Activated B cell treated with CpG ODN at 0.5 μM for 24 hours (primary cell): ENCODE measurements at regions of chr11 and their contacts with region 1.

Region 1: DNA sequence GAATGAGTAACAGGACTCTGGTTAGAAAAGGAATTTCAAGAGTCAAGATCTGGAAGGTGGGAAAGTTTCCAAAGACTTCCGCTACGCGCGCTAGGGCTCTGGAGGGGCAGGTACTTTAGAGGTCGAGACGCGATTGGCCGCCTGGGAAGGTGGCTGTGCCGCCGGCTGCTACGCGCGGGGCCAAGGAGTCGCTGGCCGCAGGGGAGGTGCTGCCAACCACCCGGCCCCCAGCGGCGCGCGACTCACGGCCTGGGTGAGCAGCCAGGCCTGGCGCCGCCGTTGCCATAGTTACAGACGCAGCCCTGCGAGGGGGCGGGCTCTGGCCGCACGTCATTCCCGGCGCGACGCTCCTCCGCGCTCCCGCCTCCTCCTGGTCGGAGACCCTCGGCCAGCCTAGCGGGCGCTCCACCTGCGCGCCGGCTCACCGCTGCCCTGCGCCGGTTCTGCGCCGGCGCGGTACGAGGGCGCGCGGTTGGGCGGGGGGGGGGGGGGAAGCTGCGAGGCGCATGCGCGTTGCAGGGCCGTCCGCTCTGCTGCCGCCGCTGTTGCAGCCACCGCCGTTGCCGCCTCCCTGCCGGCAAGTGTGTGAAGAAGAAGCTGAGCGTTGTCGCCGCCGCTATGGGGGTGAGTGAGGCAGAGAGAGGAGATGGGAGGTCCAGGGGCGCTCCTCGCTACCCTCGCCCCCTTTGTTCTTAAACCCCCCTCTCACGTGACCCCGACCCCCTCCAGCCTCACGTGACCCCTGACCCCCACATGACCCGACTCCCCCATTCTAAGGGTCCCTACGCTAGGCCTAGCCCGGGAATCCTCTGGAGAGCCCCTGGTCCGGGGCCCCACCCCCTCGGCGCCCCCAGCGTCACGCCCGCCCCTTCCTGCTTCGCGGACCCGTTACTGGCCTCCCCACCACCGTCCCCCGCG is at the start of gene NAA40:
- DNase-seq: peak; percentile 94
- ATAC-seq: peak; percentile 91
- H3K4me3 Mint-ChIP-seq: peak within 1 kb of the TSS; percentile 90
- H3K27ac Mint-ChIP-seq: peak within 1 kb of the TSS; percentile 82
- H3K4me1 Mint-ChIP-seq: peaks cover 36% of the 10 kb centered on the region
- H3K27me3 Mint-ChIP-seq: no peaks in the 10 kb centered on the region
- CTCF ChIP-seq: no peak
- total RNA-seq, gene NAA40: 28.0 and 28.6 TPM in 2 replicates

Region 2: GRCh38 chr11:63768237-63769043 is 170.3 kb before region 1 on chr11 and contains the start of gene ZFTA:
- CTCF ChIA-PET with region 1: no interaction called
- POLR2A ChIA-PET with region 1: no interaction called
- intact Hi-C with region 1: loop called (anchors 2 kb)
- DNase-seq: peak; percentile 80
- ATAC-seq: peak; percentile 68
- H3K4me3 Mint-ChIP-seq: peak within 1 kb of the TSS; percentile 94
- H3K27ac Mint-ChIP-seq: peak within 1 kb of the TSS; percentile 83
- H3K4me1 Mint-ChIP-seq: peaks cover 11% of the 10 kb centered on the region
- H3K27me3 Mint-ChIP-seq: peaks cover 4% of the 10 kb centered on the region
- CTCF ChIP-seq: no peak
- total RNA-seq, gene ZFTA: 11.2 and 12.5 TPM in 2 replicates

Region 3: GRCh38 chr11:63916837-63917691 is 21.7 kb before region 1 on chr11 and contains the start of gene RCOR2:
- CTCF ChIA-PET with region 1: no interaction called
- POLR2A ChIA-PET with region 1: interaction called, 5 read pairs
- intact Hi-C with region 1: loop called (anchors 2 kb)
- DNase-seq: peak; percentile 58
- ATAC-seq: peak; percentile 74
- H3K4me3 Mint-ChIP-seq: peak within 1 kb of the TSS; percentile 80
- H3K27ac Mint-ChIP-seq: no peak within 1 kb of the TSS
- H3K4me1 Mint-ChIP-seq: peaks cover 19% of the 10 kb centered on the region
- H3K27me3 Mint-ChIP-seq: peaks cover 2% of the 10 kb centered on the region
- CTCF ChIP-seq: no peak
- total RNA-seq, gene RCOR2: not detected in 2 replicates

Region 4: GRCh38 chr11:63961608-63962412 is 23.1 kb after region 1 on chr11:
- CTCF ChIA-PET with region 1: no interaction called
- POLR2A ChIA-PET with region 1: no interaction called
- intact Hi-C with region 1: no loop called
- DNase-seq: no peak
- ATAC-seq: no peak
- H3K4me3 Mint-ChIP-seq: no peak overlapping the region
- H3K27ac Mint-ChIP-seq: no peak overlapping the region
- H3K4me1 Mint-ChIP-seq: no peaks in the 10 kb centered on the region
- H3K27me3 Mint-ChIP-seq: peaks cover 3% of the 10 kb centered on the region
- CTCF ChIP-seq: no peak

Region 5: DNA sequence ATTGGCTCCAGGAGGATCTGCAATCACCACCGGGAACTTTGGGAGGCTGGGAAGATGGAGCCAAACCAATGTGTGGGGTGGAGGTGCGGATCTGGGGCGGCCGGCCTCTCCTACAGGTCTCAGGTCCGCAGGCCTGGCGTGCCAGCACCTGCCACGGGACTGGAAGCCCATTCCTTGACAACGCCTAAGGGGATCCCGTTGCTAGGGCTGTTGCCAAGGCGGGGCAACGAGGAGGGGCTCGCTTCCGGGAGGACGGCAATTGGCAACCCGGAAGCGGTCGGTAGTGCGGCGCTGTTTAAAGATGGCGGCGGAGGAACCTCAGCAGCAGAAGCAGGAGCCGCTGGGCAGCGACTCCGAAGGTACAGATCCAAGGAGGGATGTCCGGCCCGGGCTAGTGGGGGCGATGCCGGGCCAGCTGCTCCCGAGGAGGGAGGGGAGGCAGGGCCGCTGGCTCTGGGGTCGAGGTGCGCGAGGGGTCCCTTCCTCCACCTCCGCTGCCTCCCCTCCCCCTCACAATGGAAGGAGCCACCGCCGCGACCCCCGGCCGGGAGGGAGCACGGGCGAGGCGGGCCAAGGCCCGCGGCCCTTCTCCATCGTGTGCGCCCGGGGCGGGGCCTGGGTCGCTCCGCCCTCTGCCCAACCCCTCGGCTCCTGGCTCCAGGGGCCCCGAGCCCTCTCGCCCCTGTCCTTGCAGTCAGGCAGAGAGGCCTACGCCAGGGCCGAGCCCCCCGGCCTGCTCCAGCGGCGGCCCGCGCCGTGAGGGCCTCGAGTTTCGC is 47.6 kb after region 1 on chr11 and contains the start of gene OTUB1:
- CTCF ChIA-PET with region 1: no interaction called
- POLR2A ChIA-PET with region 1: interaction called, 14 read pairs
- intact Hi-C with region 1: loop called (anchors 1 kb)
- DNase-seq: peak; percentile 80
- ATAC-seq: peak; percentile 86
- H3K4me3 Mint-ChIP-seq: peak within 1 kb of the TSS; percentile 95
- H3K27ac Mint-ChIP-seq: peak within 1 kb of the TSS; percentile 98
- H3K4me1 Mint-ChIP-seq: peaks cover 43% of the 10 kb centered on the region
- H3K27me3 Mint-ChIP-seq: no peaks in the 10 kb centered on the region
- CTCF ChIP-seq: no peak
- total RNA-seq, gene OTUB1: 87.4 and 92.5 TPM in 2 replicates

Region 6: GRCh38 chr11:64225612-64226506 is 287.1 kb after region 1 on chr11 and contains the starts of genes NUDT22 and TRPT1:
- CTCF ChIA-PET with region 1: no interaction called
- POLR2A ChIA-PET with region 1: no interaction called
- intact Hi-C with region 1: loop called (anchors 5 kb)
- DNase-seq: peak; percentile 95
- ATAC-seq: peak; percentile 56
- H3K4me3 Mint-ChIP-seq: peak within 1 kb of the TSS; percentile 87
- H3K27ac Mint-ChIP-seq: peak within 1 kb of the TSS; percentile 81
- H3K4me1 Mint-ChIP-seq: peaks cover 39% of the 10 kb centered on the region
- H3K27me3 Mint-ChIP-seq: no peaks in the 10 kb centered on the region
- CTCF ChIP-seq: no peak
- total RNA-seq, gene NUDT22: 81.0 and 95.3 TPM in 2 replicates
- total RNA-seq, gene TRPT1: 50.6 and 51.3 TPM in 2 replicates